HEK293T (cell line): ENCODE measurements at regions of chr6 and their contacts with region 1.

Region 1: GRCh38 chr6:134174672-134175198 is 122.3 kb upstream of the SLC2A12 start:
- DNase-seq: peak; percentile 93

Region 2: DNA sequence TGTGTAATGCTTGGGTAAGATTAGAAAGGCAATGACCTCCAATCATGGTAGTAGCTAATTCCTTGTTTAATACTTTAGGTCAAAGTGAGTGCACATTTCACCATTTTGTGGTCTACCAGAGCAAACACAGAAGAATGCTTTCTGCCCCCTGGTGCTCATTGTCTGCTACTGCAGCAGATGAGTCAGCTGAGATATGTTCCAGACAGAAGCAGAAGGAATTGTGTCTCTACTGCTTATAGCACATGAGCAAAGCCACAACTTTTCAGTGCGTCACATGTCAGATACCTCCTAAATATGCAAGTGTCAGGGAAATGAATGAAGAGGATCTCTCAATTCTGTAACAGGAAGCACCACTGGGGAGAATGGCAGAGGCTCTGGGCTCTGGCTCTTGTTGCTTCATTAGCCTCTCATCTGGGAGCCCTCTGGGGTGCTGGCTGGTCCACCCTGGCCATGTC is 466.3 kb after region 1 on chr6:
- CTCF ChIA-PET with region 1: interaction called, 11 read pairs
- POLR2A ChIA-PET with region 1: no interaction called
- DNase-seq: peak; percentile 76

Region 3: DNA sequence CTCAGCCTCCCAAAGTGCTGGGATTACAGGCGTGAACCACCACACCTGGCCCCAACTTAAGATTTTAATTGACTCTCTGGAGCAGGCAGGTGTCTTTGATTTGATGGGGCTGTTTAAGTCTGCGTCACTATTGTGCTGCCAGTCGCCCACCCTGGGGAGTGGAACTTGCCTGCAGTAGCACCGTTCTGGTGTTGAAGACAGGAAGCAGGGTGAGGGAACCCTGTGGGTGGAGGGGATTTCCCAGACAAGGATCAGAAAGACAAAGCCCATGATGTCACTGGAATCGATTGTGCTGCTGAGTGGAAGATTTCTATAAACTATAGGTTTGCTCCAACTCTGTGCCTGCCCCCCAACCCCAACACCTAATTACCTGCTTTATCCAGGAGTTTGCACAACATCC is 764.2 kb after region 1 on chr6:
- CTCF ChIA-PET with region 1: interaction called, 14 read pairs
- POLR2A ChIA-PET with region 1: interaction called, 4 read pairs
- DNase-seq: no peak

Region 4: GRCh38 chr6:134954272-134955000 is 779.7 kb after region 1 on chr6:
- CTCF ChIA-PET with region 1: no interaction called
- POLR2A ChIA-PET with region 1: no interaction called
- DNase-seq: no peak